ENCODE measurements at regions of chr3 and their contacts with region 1.

Region 1: GRCh38 chr3:121707531-121708273 is 41.8 kb downstream of the GOLGB1 start:
- DNase-seq: no peak
- ATAC-seq: no peak
- H3K4me3 Mint-ChIP-seq: no peak overlapping the region
- H3K27ac Mint-ChIP-seq: no peak overlapping the region
- H3K4me1 Mint-ChIP-seq: peaks cover 2% of the 10 kb centered on the region
- H3K27me3 Mint-ChIP-seq: no peaks in the 10 kb centered on the region

Region 2: GRCh38 chr3:121637922-121638321 is 69.8 kb before region 1 on chr3:
- CTCF ChIA-PET with region 1: no interaction called
- POLR2A ChIA-PET with region 1: no interaction called
- intact Hi-C with region 1: no loop called
- DNase-seq: no peak
- ATAC-seq: no peak
- H3K4me3 Mint-ChIP-seq: no peak overlapping the region
- H3K27ac Mint-ChIP-seq: peak overlapping the region; percentile 59
- H3K4me1 Mint-ChIP-seq: peaks cover 22% of the 10 kb centered on the region
- H3K27me3 Mint-ChIP-seq: no peaks in the 10 kb centered on the region

Region 3: DNA sequence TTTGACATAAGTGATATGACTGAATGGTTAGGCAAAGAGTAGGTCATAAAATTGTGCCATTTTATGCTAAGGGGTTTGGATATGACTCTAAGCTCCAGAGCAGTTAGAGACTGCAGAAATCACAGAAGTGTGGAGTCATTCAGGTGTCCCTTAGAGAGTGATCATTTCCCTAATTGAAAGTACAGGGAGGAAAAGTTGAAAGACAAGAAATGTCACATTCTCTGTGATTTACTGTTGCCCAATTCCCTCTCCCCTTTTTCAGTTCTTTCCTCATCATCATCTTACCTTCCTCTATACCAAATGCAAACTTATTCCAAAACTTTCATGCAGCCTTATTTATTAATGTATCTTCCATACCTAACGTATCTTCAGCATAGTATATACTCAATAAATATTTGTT is 44.6 kb after region 1 on chr3:
- CTCF ChIA-PET with region 1: no interaction called
- POLR2A ChIA-PET with region 1: no interaction called
- intact Hi-C with region 1: no loop called
- DNase-seq: no peak
- ATAC-seq: no peak
- H3K4me3 Mint-ChIP-seq: no peak overlapping the region
- H3K27ac Mint-ChIP-seq: no peak overlapping the region
- H3K4me1 Mint-ChIP-seq: peaks cover 7% of the 10 kb centered on the region
- H3K27me3 Mint-ChIP-seq: no peaks in the 10 kb centered on the region

Region 4: DNA sequence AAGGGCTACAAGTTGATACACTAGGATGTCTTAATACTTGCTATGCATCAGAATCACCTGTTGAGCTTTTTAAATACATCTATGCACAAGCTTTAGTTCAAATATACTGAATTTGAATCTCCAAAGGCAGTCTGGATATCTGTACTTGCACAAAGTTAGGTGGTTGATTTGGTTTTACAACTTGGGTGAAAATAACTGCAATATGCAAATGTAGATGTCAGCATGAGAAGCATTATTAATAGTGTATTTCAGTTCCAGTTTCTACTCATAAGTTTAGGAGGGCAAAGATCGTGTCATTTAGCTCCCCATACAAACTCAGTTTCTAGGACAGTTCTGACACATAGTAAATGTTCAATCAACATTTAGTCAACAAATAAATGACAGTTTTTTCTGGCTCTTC is 101.5 kb after region 1 on chr3:
- CTCF ChIA-PET with region 1: no interaction called
- POLR2A ChIA-PET with region 1: interaction called, 14 read pairs
- intact Hi-C with region 1: no loop called
- DNase-seq: no peak
- ATAC-seq: peak; percentile 63
- H3K4me3 Mint-ChIP-seq: no peak overlapping the region
- H3K27ac Mint-ChIP-seq: no peak overlapping the region
- H3K4me1 Mint-ChIP-seq: peaks cover 17% of the 10 kb centered on the region
- H3K27me3 Mint-ChIP-seq: no peaks in the 10 kb centered on the region

Measured in activated CD4-positive, alpha-beta T cell treated with anti-CD3 and anti-CD28 coated beads for 36 hours (primary cell).